ENCODE measurements at regions of chr11 and their contacts with region 1.

Region 1: DNA sequence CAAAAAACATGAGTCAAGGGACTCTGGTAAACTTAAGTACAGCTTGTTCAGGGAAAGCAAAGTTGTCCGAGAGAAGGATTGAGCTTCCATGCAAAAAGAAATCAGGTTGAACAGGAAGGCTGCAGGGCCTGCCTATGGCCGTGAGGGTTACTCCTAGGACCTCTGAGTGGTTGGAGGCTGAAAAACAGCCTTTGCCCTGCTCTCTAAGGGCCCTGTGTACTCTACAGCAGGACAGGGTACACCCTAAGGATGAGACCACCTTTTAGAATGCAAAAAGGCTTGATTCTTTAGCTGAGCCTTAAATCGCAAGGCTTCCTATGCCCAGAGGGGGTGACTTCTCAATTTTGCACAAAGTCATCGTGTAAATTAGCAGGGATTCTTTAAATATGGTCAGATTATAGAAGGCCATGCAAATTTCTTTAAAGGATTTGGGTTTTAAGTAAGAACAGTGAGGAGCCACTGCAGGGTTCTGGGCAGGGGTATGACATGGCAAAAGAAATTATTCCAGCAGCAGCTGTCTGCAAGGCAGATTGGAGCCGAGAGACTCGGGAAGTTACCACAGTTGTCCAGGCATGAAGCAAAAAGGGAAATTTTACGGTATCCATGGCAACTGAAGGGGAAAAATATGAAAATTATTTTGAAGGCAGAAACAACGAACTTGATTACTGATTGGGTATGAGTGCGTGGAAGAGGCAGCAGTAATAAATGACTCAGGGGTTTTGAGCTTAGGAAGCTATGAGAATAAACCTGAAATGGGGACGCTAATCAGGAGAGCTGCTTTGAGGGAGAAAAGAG is 91.8 kb downstream of the FAM76B start:
- DNase-seq: no peak
- H3K4me3 ChIP-seq: no peak overlapping the region
- H3K27ac ChIP-seq: no peak overlapping the region
- H3K4me1 ChIP-seq: no peaks in the 10 kb centered on the region
- H3K27me3 ChIP-seq: no peaks in the 10 kb centered on the region
- CTCF ChIP-seq: no peak
- EP300 ChIP-seq: no peak
- POLR2A ChIP-seq: no peak
- RAD21 ChIP-seq: no peak

Region 2: DNA sequence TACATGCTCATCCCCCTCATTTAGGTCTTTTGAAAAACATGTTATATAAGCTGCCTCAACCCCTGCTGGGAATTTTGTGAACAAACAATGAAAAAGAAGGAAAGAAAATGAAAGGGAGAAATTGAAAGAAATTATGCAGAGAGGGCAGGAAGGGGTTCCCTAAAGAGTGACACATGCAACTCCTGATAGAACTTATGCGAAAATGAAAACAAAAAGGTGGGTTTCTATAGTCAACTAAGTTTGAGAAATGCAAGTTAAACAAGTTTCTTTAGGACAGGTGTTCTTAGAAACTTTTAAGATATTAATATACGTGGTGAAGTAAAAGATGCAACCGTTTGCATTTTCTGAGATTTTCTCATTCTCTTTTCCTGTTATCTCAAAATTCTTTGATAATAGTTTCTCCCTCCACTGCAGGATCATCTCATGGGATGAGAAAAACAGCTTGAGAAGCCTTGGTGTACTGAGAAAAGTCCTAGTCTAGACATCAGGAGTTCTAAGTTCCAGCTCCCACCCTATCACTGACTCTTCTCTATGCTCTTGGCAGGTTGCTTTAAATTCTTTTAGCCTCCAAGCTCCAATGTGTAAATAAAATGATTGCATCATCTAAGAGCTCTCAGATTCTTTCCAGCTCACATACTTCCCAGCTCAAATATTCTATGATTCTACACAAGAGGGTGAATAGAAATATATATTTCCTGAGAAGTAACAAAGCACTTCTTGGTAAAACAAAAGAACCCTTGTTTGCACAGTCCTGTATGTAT is 17.5 kb before region 1 on chr11:
- CTCF ChIA-PET with region 1: interaction called, 14 read pairs
- POLR2A ChIA-PET with region 1: interaction called, 3 read pairs
- DNase-seq: no peak
- H3K4me3 ChIP-seq: no peak overlapping the region
- H3K27ac ChIP-seq: no peak overlapping the region
- H3K4me1 ChIP-seq: peaks cover 0 to 2% (median 0%) of the 10 kb centered on the region in 4 experiments; a peak in 1 of 7 replicates
- H3K27me3 ChIP-seq: no peaks in the 10 kb centered on the region
- CTCF ChIP-seq: no peak
- EP300 ChIP-seq: no peak
- POLR2A ChIP-seq: no peak
- RAD21 ChIP-seq: no peak